ENCODE measurements at regions of chr16 and their contacts with region 1.

Region 1: DNA sequence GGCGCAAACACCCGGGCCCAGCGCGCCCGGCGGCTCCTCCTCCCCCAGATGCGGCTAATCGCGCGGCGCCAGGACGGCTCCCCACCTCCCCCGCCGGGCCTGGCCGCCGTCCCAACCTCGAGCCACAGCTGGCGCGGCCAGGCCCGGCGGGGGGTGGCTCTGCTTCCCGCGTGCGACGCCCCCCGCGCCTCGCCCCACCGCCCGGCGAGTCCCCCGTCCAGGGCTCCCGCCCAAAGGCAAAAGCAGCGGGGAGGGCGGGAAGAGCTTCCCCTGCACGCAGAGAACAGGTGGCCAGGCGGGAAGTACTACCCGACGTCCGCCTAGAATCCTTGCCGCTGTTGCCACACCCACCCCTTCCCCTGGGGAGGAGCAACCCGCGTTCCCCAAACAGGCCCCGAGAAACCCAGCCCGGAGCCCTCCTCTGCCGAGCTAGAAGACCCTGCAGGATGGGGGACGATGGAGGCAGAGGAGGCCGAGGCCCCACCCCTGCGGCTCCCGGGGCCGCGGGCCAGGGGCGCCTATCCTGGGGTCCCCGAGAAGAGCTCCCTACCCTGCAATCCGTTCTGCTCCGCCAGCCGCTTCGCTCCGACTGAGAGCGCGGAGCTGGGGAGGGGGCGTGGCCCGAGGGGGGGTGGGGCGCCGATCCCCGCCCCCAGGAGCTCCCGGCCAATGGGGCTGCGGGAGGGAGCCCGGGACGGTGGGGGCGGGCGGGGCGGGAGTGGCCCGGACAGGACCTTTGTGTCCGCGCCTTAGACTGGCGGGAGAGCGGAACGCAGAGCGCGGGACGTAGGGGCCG is at the start of gene CARHSP1:
- DNase-seq: peak; percentile 84
- H3K4me3 Mint-ChIP-seq: peak within 1 kb of the TSS; percentile 97
- H3K27ac Mint-ChIP-seq: peak within 1 kb of the TSS; percentile 96
- H3K4me1 Mint-ChIP-seq: peaks cover 35% of the 10 kb centered on the region
- H3K27me3 Mint-ChIP-seq: no peaks in the 10 kb centered on the region
- total RNA-seq, gene CARHSP1: 84.4 and 90.8 TPM in 2 replicates

Region 2: DNA sequence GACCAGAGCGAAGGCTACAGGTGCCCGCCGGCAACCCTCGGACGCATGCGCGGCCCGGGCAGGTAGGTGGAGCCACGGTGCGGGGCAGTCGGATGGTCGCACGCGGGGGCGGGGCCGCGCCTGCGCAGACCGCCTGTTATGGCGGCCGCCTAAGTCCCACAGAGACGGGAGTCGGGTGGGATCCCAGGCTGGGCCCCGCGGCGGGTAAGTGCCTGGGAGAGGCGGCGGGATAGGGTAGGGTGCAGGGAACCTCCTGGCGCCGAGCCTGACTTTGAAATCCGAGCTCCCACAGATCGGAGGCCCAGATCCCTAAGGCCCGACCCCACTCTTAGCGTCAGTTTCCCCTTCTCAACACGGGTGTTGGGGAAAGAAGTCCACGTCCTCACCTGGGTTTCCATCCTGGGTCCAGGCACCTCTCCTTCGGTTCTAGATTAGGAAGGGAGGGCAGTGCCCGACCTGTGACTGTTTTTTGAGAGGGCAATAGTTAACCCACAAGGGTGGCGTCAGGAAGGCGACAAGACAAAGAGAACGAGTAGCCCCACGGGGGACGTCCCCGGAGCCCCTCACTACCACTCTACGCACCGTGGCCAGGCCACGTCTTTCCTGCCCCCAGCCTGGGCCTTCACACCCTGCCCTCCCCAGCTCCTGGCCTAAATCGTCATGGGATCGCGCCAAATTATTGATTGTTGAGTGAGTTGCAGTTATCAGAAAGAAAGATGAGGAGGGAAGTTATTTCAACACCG is 246.9 kb before region 1 on chr16 and contains the start of gene METTL22:
- intact Hi-C with region 1: loop called (anchors 2 kb)
- DNase-seq: peak; percentile 87
- H3K4me3 Mint-ChIP-seq: peak within 1 kb of the TSS; percentile 90
- H3K27ac Mint-ChIP-seq: peak within 1 kb of the TSS; percentile 80
- H3K4me1 Mint-ChIP-seq: peaks cover 19% of the 10 kb centered on the region
- H3K27me3 Mint-ChIP-seq: peaks cover 4% of the 10 kb centered on the region
- total RNA-seq, gene METTL22: 34.9 and 39.0 TPM in 2 replicates

Region 3: DNA sequence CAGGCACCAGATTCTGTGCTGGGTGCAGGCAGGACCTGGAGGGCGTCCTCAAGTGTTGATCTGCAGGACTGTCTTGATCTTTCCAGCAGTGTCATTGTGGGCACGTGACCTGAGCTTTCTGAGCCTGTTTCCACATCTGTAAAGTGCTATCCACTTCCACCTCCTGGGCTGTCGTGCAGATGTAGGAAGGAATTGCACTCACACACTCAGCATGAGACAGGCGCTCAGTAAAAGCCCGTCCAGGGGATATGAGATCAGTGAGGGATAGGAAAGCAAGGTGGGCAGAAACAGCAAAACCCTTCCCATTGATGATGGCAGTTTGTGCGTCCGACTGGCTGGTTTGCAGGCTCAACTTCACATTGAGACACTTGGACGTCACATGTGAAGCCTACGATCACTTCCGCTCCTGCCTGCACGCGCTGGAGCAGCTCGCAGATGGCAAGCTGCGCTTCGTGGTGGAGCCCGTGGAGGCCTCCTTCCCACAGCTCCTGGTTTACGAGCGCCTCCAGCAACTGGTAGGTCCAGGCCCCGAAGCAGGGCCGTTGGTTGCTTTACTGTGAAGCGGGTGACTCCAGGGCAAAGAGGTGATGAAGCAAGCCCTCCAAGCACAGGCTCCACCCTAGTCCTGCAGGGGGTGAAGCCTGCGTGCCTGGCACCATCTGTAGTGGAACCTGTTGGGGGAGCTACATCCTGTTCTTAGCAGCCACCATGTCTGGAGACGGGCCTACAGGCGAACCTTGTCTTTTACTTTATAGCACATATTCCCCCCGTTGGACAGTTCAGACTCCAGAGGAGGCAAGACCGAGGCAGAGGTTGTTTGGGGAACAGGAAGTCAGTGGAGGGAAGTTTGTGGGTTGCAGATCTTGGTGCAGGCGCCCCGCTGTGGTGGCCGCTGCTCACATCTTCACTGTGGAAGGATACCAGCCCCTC is 224.1 kb before region 1 on chr16:
- intact Hi-C with region 1: no loop called
- DNase-seq: no peak
- H3K4me3 Mint-ChIP-seq: no peak overlapping the region
- H3K27ac Mint-ChIP-seq: peak overlapping the region; percentile 73
- H3K4me1 Mint-ChIP-seq: peaks cover 13% of the 10 kb centered on the region
- H3K27me3 Mint-ChIP-seq: no peaks in the 10 kb centered on the region

Region 4: GRCh38 chr16:8797364-8798173 is 71.0 kb before region 1 on chr16 and contains the starts of genes PMM2 and TMEM186:
- intact Hi-C with region 1: loop called (anchors 1 kb)
- DNase-seq: peak; percentile 94
- H3K4me3 Mint-ChIP-seq: peak within 1 kb of the TSS; percentile 95
- H3K27ac Mint-ChIP-seq: peak within 1 kb of the TSS; percentile 90
- H3K4me1 Mint-ChIP-seq: peaks cover 36% of the 10 kb centered on the region
- H3K27me3 Mint-ChIP-seq: no peaks in the 10 kb centered on the region
- total RNA-seq, gene PMM2: 62.5 and 67.6 TPM in 2 replicates
- total RNA-seq, gene TMEM186: 15.6 and 15.9 TPM in 2 replicates

Region 5: DNA sequence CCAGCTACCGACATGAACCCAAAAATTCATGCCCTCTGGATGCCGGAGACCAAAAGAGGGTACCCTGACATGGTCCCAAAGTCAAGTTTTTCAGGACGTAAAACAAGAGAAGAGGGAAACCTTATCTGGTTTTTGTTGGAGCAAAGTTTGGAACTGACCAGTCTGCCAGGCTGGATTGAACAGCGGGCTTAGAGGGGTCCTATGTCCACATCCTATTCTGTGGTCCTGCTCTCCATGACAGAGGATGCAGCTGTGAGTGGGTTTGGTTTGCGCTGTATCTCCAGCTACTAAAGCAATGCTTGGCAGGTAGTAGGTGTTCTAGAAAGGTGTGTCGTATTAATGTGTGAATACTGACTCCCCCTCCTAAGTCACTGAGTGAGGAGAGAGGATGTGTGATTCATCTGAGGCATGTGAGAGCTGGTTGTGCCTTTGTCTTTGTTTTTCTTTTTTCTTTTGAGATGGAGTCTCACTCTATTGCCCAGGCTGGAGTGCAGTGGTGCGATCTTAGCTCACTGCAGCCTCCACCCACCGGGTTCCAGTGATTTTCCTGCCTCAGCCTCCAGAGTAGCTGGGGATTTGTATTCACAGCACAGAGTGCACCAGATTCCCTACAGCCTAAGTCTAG is 40.0 kb before region 1 on chr16:
- intact Hi-C with region 1: no loop called
- DNase-seq: no peak
- H3K4me3 Mint-ChIP-seq: no peak overlapping the region
- H3K27ac Mint-ChIP-seq: peak overlapping the region; percentile 40
- H3K4me1 Mint-ChIP-seq: peaks cover 5% of the 10 kb centered on the region
- H3K27me3 Mint-ChIP-seq: no peaks in the 10 kb centered on the region

Region 6: GRCh38 chr16:8915722-8916301 is 47.2 kb after region 1 on chr16:
- intact Hi-C with region 1: loop called (anchors 2 kb)
- DNase-seq: no peak
- H3K4me3 Mint-ChIP-seq: no peak overlapping the region
- H3K27ac Mint-ChIP-seq: no peak overlapping the region
- H3K4me1 Mint-ChIP-seq: peaks cover 61% of the 10 kb centered on the region
- H3K27me3 Mint-ChIP-seq: no peaks in the 10 kb centered on the region

Region 7: GRCh38 chr16:9090960-9091866 is 222.6 kb after region 1 on chr16 and contains the start of gene HAPSTR1:
- intact Hi-C with region 1: loop called (anchors 1 kb)
- DNase-seq: peak; percentile 98
- H3K4me3 Mint-ChIP-seq: peak within 1 kb of the TSS; percentile 98
- H3K27ac Mint-ChIP-seq: peak within 1 kb of the TSS; percentile 95
- H3K4me1 Mint-ChIP-seq: peaks cover 25% of the 10 kb centered on the region
- H3K27me3 Mint-ChIP-seq: no peaks in the 10 kb centered on the region
- total RNA-seq, gene HAPSTR1: 54.5 and 54.9 TPM in 2 replicates

Region 8: DNA sequence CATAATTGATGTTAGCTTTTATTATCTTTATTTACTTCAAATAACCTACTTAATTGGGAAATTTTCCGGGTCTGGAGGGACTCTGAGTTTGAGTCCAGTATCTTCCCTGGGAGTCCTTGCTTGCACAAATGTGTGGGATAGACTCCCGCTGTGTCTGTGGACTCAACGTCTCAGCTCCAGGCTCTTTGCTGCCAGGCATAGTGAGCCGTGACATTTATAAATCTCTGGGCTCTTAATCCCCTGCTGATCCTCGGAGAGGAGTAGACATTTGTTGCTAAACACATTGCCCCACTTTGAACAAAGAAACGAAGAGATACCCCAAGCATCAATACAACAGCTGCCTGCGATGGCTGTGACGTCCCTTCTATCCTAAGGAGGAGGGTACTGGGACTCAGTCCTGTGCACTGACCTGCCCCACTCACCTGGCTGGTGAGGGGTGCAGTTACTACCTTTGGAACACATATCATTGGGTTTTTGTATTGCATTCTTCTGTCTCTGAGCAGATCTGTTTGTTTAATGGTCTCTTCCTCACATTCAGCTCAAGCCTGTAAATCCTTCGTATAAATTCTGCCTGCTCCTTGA is 539.8 kb after region 1 on chr16:
- intact Hi-C with region 1: no loop called
- DNase-seq: no peak
- H3K4me3 Mint-ChIP-seq: no peak overlapping the region
- H3K27ac Mint-ChIP-seq: no peak overlapping the region
- H3K4me1 Mint-ChIP-seq: no peaks in the 10 kb centered on the region
- H3K27me3 Mint-ChIP-seq: no peaks in the 10 kb centered on the region

Measured in activated T-helper 2 cell treated with anti-CD3 and anti-CD28 coated beads, Interferon-gamma antibody, Interleukin-2, Interleukin-4, amounts not matched to agents 10 μg/mL and 5 μg/mL and 100 μg/mL, durations not matched to agents 14 hours and 24 hours and 36 hours (primary cell).